Endothelial cell of umbilical vein (primary cell): ENCODE measurements at regions of chr7 and their contacts with region 1.

Region 1: GRCh38 chr7:35037526-35038339 is 448 bp upstream of the DPY19L1 start:
- DNase-seq: peak; percentile 89
- H3K4me3 ChIP-seq: peak overlapping the region; percentile 45 to 71 (median 66)
- H3K27ac ChIP-seq: peak overlapping the region; percentile 75
- H3K4me1 ChIP-seq: peaks cover 27% of the 10 kb centered on the region
- H3K27me3 ChIP-seq: no peaks in the 10 kb centered on the region
- CTCF ChIP-seq: peak; percentile 87 to 93
- POLR2A ChIP-seq: no peak

Region 2: GRCh38 chr7:34453150-34453549 is 584.6 kb before region 1 on chr7:
- CTCF ChIA-PET with region 1: no interaction called
- POLR2A ChIA-PET with region 1: no interaction called
- dilution Hi-C with region 1: no loop called
- intact Hi-C with region 1: loop called (anchors 2 kb)
- DNase-seq: peak; percentile 71
- H3K4me3 ChIP-seq: peak overlapping the region in 1 of 3 experiments; percentile 27
- H3K27ac ChIP-seq: peak overlapping the region; percentile 63
- H3K4me1 ChIP-seq: peaks cover 30% of the 10 kb centered on the region
- H3K27me3 ChIP-seq: no peaks in the 10 kb centered on the region
- CTCF ChIP-seq: no peak
- POLR2A ChIP-seq: no peak

Region 3: DNA sequence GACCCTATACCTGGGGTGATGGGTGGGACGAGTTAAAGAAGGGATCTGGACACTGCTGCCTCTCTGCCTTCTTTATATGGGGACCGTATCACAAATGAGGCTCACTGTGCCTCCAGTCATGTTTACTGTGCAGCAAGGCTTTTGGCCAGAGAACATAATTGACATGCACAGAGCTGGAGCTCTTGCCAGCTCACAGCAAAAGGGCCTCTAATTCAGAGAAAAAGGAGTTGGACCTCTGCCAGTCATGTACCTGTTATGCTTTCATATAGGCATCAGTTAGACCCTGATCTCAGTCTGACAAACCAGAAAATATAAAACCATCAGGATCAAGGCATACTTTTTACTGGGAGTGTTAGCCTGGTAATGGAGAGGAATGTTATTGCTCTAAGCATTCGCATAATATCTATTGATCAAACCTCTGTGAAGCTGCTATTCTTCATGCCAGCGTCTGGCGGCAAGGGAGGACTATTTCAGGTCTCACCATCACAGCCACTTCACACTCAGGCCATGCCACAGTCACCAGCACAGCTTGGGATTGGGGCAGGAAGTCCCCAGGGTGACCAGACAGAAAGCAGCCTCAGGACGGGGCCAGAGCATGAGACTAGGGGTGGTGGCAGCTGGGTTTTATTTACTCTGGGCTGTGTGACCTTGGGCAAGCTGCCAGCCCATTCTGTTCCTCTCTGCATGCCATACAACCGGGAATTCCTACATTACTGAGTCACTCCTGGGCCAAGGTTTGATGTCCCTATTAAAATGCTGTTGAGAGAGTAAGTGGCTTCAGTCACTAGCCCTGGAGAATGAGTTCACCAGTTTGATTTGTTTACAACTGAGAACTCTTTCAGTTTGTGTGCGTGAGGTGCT is 289.6 kb before region 1 on chr7:
- CTCF ChIA-PET with region 1: no interaction called
- POLR2A ChIA-PET with region 1: no interaction called
- dilution Hi-C with region 1: no loop called
- intact Hi-C with region 1: loop called (anchors 1 kb)
- DNase-seq: peak; percentile 97
- H3K4me3 ChIP-seq: no peak overlapping the region
- H3K27ac ChIP-seq: peak overlapping the region; percentile 36
- H3K4me1 ChIP-seq: peaks cover 16% of the 10 kb centered on the region
- H3K27me3 ChIP-seq: no peaks in the 10 kb centered on the region
- CTCF ChIP-seq: no peak
- POLR2A ChIP-seq: no peak

Region 4: DNA sequence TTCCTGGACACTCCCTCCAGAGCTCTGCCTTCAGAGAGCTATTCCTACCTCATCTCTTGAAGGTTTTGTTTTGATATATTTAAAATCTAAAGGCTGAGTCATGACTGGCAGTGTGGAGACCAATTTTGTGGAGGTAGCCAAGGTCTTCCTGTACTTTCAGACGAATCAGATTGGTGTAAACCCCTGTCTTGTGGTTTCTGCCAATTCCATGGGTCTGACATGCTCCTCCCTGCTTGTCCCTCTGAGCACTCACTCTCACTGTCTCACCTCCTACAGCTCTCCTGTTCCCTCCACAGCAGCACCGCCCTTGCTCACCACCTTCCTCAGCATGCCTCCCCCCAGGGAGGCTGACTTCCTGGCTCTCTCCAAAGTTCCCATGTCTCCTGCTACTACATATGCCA is 199.9 kb before region 1 on chr7:
- CTCF ChIA-PET with region 1: no interaction called
- POLR2A ChIA-PET with region 1: no interaction called
- dilution Hi-C with region 1: no loop called
- intact Hi-C with region 1: loop called (anchors 5 kb)
- DNase-seq: no peak
- H3K4me3 ChIP-seq: peak overlapping the region in 1 of 3 experiments; percentile 10
- H3K27ac ChIP-seq: peak overlapping the region; percentile 28
- H3K4me1 ChIP-seq: peaks cover 14% of the 10 kb centered on the region
- H3K27me3 ChIP-seq: no peaks in the 10 kb centered on the region
- CTCF ChIP-seq: no peak
- POLR2A ChIP-seq: no peak

Region 5: DNA sequence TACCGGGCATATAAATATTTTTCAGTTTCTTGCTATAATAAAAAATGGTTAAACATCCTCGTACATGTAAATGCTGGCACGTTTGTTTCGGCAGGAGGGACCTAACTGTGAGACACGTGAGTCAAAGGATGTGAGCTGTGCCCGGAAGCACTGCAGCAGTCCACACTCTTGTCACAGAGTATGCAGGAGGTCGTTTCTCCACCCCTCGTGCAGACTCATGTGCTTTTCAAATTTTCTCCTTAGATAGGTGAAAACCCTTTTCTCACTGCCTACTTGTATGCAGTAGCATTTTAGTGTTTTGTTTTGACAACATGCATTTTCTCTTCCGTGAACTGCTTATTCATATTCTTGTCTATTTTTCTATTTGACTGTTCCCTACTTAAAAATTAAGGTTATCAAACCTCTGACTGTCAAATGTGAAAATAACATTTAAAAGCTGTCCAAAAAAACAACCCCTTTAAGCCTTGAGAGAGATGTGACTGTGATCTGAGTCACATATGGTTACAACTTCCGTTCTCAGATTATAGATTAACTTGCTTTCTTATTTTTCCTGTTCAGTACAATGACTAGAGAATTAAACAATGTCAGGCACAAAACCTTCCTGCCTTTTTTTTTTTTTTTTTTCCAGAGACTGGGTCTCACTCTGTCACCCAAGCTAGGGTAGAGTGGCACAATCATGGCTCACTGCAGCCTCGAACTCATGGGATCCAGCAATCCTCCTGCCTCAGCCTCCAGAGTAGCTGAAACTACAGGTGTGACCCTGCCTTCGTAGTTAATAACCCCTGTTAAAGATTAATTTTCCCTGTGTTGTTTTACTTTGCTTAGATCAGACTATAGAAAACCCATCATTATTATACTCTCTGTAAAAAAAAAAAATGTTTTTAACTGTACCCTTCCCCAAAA is 45.5 kb before region 1 on chr7:
- CTCF ChIA-PET with region 1: interaction called, 4 read pairs
- POLR2A ChIA-PET with region 1: no interaction called
- dilution Hi-C with region 1: no loop called
- intact Hi-C with region 1: loop called (anchors 1 kb)
- DNase-seq: peak; percentile 77
- H3K4me3 ChIP-seq: peak overlapping the region in 1 of 3 experiments; percentile 30
- H3K27ac ChIP-seq: peak overlapping the region; percentile 64
- H3K4me1 ChIP-seq: peaks cover 18% of the 10 kb centered on the region
- H3K27me3 ChIP-seq: no peaks in the 10 kb centered on the region
- CTCF ChIP-seq: no peak
- POLR2A ChIP-seq: peak; percentile 29

Region 6: DNA sequence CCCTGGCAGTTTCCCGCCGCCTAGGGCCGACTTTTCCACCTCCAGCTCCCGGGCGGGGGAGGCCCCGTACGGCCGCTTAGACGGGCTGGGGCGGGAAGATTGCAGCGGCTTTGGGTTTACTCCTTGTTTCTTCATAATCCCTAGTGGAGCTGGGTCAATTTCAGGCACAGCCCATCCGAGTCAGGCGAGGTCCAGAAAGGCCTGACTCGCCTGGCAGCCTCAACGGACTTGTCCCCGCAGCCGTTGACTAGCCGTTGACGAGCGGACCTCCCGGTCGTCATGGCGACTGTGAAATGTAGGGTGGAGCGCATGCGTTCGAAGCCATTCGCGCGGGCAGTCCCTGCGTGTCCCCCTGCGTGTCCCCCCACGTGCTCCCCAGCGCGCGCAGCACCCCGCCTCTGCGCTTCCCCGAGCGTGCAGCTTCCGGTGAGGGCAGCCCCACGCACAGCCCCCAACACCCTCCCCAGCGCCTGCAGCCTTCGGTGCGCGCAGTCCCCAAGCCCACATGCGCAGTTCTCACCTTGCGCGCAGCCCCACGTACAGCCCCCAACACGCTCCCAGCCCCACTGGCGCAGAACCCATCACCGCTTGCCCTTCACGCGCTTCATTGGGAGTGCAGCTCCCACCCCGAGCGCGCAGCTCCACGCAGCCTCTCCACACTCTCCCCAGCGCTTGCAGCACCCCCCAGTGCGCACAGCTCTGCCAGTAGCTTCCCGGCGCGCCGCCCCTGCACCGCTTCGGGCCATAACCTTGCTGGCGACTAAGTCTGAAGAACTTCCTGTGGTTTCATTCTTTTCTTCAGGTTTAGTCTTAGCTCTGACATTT is 148.4 kb after region 1 on chr7:
- CTCF ChIA-PET with region 1: no interaction called
- POLR2A ChIA-PET with region 1: no interaction called
- dilution Hi-C with region 1: no loop called
- intact Hi-C with region 1: loop called (anchors 10 kb)
- DNase-seq: peak; percentile 24
- H3K4me3 ChIP-seq: peak overlapping the region; percentile 8 to 34 (median 11)
- H3K27ac ChIP-seq: no peak overlapping the region
- H3K4me1 ChIP-seq: peaks cover 8% of the 10 kb centered on the region
- H3K27me3 ChIP-seq: peaks cover 7 to 17% of the 10 kb centered on the region in 2 experiments
- CTCF ChIP-seq: no peak
- POLR2A ChIP-seq: no peak

Region 7: DNA sequence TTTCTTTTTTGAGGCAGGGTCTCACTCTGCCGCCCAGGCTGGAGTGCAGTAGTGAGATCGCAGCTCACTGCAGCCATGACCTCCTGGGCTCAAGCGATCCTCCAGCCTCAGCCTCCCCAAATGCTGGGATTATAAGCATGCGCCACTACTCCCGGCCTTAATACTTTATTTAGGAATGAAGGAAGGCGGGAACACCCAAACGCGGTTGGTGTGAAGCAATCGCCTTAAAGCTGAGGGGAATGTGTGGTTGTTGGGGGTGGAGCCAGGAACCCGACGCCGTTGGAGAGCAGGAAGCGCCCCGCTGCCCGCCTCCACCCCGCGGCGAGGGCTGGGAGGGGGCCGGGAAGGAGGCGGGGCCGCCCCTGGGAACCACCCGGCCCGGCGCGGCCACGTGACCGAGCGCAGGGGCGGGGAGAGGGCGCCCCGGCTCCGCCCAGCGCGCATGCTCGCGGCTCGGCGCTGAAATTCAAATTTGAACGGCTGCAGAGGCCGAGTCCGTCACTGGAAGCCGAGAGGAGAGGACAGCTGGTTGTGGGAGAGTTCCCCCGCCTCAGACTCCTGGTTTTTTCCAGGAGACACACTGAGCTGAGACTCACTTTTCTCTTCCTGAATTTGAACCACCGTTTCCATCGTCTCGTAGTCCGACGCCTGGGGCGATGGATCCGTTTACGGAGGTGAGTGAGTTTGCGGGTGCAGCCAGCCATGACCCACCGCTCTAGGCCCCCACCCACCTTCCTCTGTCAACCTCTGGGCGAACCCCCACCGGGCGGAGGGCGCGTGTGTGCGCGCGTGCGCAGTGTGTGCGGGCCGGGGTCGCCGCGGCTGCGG is 1351.9 kb after region 1 on chr7 and contains the start of gene ANLN:
- CTCF ChIA-PET with region 1: no interaction called
- POLR2A ChIA-PET with region 1: no interaction called
- dilution Hi-C with region 1: no loop called
- intact Hi-C with region 1: loop called (anchors 10 kb)
- DNase-seq: peak; percentile 86
- H3K4me3 ChIP-seq: peak within 1 kb of the TSS; percentile 57 to 91 (median 87)
- H3K27ac ChIP-seq: peak within 1 kb of the TSS; percentile 63
- H3K4me1 ChIP-seq: peaks cover 31% of the 10 kb centered on the region
- H3K27me3 ChIP-seq: peaks cover 0 to 2% of the 10 kb centered on the region in 2 experiments
- CTCF ChIP-seq: no peak
- POLR2A ChIP-seq: peak; percentile 49
- total RNA-seq, gene ANLN: 112 and 119 TPM in 2 replicates